Prostate gland (tissue), 2 donors: ENCODE measurements at regions of chr2 and their contacts with region 1.

Region 1: DNA sequence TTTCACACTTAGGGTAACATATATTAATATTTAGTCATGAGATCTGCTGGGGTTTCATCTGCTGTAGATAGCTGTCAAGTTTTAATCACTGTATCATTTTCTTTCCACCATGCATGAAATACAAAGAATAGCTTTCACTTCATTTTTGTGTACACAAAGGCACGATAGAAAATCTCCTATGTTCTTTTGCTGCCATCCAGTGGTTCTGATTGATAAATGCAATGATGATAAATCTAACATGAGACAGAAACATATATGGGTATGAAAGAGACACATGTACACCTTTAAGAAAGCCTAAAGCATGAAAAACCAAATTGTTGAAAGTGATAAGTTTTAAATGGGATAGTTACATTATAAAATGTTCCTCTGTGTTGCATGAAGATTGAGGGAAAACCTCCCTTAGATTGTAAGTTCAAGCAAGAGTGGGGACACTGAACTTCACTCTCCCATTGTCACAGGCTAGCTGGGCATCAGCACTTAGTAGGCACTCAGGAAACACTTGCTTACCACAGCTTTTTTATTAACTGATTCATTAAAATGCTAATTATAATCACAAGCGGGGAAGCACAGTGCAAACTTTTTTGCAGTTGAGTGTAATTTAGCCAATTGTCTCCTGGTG is 31.2 kb downstream of the C1D start:
- DNase-seq: no peak
- H3K4me3 ChIP-seq: no peak overlapping the region
- H3K27ac ChIP-seq: no peak overlapping the region
- H3K4me1 ChIP-seq: no peaks in the 10 kb centered on the region
- H3K27me3 ChIP-seq: no peaks in the 10 kb centered on the region
- CTCF ChIP-seq: peak; percentile 20 to 85 (median 76)
- POLR2A ChIP-seq: no peak

Region 2: DNA sequence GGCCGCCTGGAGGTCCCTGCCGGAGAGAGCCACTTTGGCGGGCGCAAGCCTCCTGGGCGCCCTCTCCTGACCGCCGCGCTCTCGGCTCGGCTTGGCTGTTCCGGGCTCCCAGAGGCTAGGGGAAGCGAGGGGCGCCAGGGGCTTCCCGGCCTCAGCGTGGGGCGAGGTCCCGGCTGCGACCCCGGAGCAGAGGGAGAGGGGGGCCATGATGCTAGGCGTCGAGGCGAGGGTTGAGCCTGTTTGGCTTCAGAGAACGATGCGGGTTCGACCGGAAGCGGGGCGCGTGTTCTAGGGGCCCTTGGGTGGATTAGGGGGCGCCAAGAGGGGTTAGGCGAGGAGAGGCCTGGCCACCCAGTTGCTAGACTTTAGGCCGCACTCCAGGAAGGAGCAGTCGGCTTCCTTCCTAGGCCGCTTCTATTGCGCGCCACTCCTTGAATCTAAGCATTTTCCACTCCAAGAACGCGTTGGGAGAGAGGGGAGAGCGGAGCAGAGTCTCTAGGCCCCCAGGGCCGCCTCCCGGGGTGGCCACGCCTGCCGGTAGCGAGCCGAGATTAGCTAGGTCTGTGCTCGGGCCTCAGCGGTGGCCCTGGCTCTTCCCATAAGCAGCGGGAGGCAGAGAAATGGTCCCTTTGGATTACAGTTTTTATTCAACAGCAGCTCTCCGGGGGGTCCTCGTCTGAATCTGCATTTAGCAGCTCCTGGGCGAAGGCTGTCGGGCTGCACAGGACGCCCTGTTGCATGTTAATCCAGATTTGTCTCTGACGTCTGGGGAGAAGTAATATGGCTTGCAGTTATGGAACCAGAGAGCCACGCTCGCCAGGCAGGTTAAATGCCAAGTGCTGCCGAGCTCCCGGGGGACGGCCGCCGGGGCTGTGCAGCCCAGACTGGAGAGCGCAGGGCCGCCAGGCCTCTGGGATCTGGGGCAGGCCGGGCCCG is 1585.5 kb before region 1 on chr2:
- intact Hi-C with region 1: loop called (anchors 10 kb)
- DNase-seq: no peak
- H3K4me3 ChIP-seq: peak overlapping the region; percentile 31
- H3K27ac ChIP-seq: peak overlapping the region; percentile 85 to 87
- H3K4me1 ChIP-seq: no peaks in the 10 kb centered on the region
- H3K27me3 ChIP-seq: peaks cover 4% of the 10 kb centered on the region
- CTCF ChIP-seq: no peak
- POLR2A ChIP-seq: no peak

Region 3: DNA sequence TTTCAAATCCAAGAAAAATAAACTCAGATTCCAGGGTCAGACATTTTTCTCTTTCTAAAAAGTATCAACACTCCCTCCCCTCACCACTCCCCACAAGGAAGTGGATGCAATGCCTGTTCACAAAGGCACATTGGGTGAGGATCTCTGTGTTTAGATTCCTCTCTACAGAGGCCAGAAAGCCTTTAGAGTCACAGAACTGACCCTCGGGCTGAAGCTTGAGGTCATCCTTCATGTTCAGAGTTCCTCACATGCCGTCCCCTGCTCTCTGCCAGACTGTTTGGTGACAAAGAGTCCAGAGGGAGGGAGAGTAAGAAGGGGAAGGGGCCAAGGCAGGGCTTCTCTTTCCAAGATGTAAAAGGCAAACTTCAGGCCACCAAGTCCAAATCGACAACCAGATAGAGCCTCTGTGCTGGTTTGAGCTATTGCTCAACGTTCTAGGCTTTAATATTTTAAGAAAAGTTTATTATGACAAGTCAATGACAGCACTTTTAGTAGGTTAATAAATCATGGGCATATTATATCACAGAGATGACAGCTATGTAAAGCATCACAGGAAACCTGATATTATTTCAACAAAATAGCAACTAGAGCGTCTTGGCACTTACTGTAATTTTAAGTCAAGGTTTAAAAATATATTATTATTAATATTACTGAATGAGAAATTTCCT is 365.1 kb before region 1 on chr2:
- intact Hi-C with region 1: loop called (anchors 10 kb)
- DNase-seq: peak; percentile 4
- H3K4me3 ChIP-seq: no peak overlapping the region
- H3K27ac ChIP-seq: peak overlapping the region in 1 of 2 donors; percentile 29
- H3K4me1 ChIP-seq: no peaks in the 10 kb centered on the region
- H3K27me3 ChIP-seq: no peaks in the 10 kb centered on the region
- CTCF ChIP-seq: no peak
- POLR2A ChIP-seq: no peak

Region 4: GRCh38 chr2:67867735-67868134 is 163.9 kb before region 1 on chr2:
- intact Hi-C with region 1: loop called (anchors 5 kb)
- DNase-seq: no peak
- H3K4me3 ChIP-seq: no peak overlapping the region
- H3K27ac ChIP-seq: no peak overlapping the region
- H3K4me1 ChIP-seq: no peaks in the 10 kb centered on the region
- H3K27me3 ChIP-seq: no peaks in the 10 kb centered on the region
- CTCF ChIP-seq: no peak
- POLR2A ChIP-seq: no peak

Region 5: DNA sequence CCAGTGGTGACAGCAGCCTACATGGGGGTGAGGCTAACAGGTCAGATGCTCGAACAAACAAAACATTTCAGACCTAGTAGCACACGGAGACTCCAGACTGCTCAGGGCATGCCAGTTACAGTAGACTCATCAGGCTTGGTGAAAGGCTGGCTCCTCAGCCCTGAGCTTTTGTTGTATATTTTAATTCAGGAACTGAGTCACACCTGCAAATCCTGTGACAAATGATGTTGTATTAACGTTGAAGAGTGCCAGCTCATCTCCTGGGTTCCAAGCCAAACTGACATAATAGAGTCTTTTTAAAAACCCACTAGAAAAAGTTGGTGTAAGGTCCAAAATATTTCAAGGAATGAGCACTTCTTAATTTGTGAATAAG is 34.1 kb before region 1 on chr2:
- intact Hi-C with region 1: no loop called
- DNase-seq: no peak
- H3K4me3 ChIP-seq: no peak overlapping the region
- H3K27ac ChIP-seq: no peak overlapping the region
- H3K4me1 ChIP-seq: no peaks in the 10 kb centered on the region
- H3K27me3 ChIP-seq: no peaks in the 10 kb centered on the region
- CTCF ChIP-seq: no peak
- POLR2A ChIP-seq: no peak